ENCODE measurements at regions of chr1 and their contacts with region 1.

Region 1: DNA sequence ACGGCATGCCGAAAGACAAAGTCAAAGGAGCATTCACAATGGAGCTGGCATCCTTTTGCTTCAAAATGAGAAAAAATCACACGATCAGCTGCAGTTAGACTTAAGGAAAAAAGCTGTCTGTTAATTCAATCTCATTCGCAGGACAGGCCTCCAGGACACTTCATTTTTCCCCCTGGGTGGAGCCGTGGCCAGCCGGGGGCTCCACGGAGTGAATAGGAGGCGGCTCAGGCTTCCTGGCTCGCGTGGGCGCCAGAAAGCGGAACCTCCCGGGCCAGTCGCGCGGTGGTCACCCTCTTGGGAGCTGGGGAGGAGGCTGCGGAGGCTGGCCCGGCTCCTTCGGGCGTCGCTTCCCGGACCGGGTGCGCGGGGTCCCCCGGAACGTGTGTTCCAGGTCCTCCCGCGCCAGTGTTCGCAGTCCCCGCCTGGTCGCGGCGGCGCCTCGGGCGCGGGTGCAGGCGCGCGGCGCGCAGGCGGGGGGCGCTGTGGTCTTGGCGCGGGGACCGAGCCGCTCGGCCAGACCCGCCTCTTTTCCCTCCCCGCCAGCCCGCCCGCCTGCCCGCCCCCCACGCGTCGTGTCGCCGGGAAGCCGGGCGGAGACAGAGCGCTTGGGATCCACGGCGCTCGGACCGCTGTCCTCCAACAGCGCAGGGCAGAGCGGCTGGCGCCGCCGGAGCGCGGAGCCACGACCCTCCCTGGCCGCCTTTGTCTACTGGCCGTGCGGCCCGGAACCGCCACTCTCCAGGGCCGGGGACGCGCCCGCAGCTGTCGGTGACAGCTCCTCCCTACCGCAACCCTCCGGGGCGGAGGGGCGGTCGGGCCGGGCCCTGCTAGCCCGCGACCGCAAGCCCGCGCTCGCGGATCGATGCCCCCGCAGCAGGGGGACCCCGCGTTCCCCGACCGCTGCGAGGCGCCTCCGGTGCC is at the start of gene RHOU:
- DNase-seq: peak; percentile 82
- ATAC-seq: peak; percentile 88
- H3K4me3 Mint-ChIP-seq: peak within 1 kb of the TSS; percentile 70
- H3K27ac Mint-ChIP-seq: no peak within 1 kb of the TSS
- H3K4me1 Mint-ChIP-seq: peaks cover 8% of the 10 kb centered on the region
- H3K27me3 Mint-ChIP-seq: peaks cover 10% of the 10 kb centered on the region
- total RNA-seq, gene RHOU: 1.2 TPM

Region 2: GRCh38 chr1:228853637-228854036 is 118.5 kb after region 1 on chr1:
- CTCF ChIA-PET with region 1: no interaction called
- POLR2A ChIA-PET with region 1: no interaction called
- intact Hi-C with region 1: no loop called
- DNase-seq: no peak
- ATAC-seq: no peak
- H3K4me3 Mint-ChIP-seq: no peak overlapping the region
- H3K27ac Mint-ChIP-seq: no peak overlapping the region
- H3K4me1 Mint-ChIP-seq: no peaks in the 10 kb centered on the region
- H3K27me3 Mint-ChIP-seq: peaks cover 3% of the 10 kb centered on the region

Region 3: GRCh38 chr1:228921481-228921880 is 186.3 kb after region 1 on chr1:
- CTCF ChIA-PET with region 1: no interaction called
- POLR2A ChIA-PET with region 1: no interaction called
- intact Hi-C with region 1: loop called in 1 of 2 experiments (anchors 10 kb)
- DNase-seq: no peak
- ATAC-seq: no peak
- H3K4me3 Mint-ChIP-seq: no peak overlapping the region
- H3K27ac Mint-ChIP-seq: no peak overlapping the region
- H3K4me1 Mint-ChIP-seq: no peaks in the 10 kb centered on the region
- H3K27me3 Mint-ChIP-seq: peaks cover 2% of the 10 kb centered on the region

Region 4: GRCh38 chr1:228927946-228928898 is 193.1 kb after region 1 on chr1:
- CTCF ChIA-PET with region 1: no interaction called
- POLR2A ChIA-PET with region 1: no interaction called
- intact Hi-C with region 1: loop called (anchors 1 to 10 kb)
- DNase-seq: peak; percentile 57
- ATAC-seq: peak; percentile 92
- H3K4me3 Mint-ChIP-seq: no peak overlapping the region
- H3K27ac Mint-ChIP-seq: peak overlapping the region; percentile 17
- H3K4me1 Mint-ChIP-seq: peaks cover 11% of the 10 kb centered on the region
- H3K27me3 Mint-ChIP-seq: peaks cover 2% of the 10 kb centered on the region

Region 5: DNA sequence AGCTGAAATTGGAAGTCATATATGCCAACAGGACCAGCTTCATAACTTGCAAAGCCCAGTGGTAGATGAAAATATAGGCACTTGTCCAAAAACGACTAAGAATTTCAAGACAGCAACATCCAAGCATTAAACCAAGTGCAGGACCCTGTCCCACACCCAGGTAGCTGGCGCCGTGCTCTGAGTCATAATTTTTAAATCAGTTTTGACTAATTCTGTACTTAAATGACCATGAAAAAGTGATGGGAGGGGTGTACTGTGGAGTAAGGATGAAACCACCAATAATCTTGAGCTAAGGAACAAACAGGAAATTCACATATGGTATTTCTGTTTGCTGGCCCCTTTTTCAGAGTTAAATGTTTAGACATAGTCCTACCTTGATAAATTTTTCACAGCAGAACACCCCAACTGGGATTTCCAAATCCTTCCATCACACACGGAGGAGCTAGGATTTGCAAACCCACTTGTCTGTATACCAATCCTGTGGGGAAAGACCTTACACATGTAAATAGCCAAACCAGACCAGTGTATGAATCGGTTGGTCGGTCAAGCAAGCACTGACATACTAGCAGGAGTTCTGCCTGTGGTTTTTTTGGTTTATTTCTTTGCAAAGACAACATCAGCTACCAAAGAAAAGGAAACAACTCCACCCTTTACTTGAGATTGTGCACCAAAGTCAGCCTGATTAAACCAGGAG is 300.1 kb after region 1 on chr1:
- CTCF ChIA-PET with region 1: no interaction called
- POLR2A ChIA-PET with region 1: no interaction called
- intact Hi-C with region 1: loop called in 1 of 2 experiments (anchors 10 kb)
- DNase-seq: peak; percentile 26
- ATAC-seq: peak; percentile 65
- H3K4me3 Mint-ChIP-seq: no peak overlapping the region
- H3K27ac Mint-ChIP-seq: no peak overlapping the region
- H3K4me1 Mint-ChIP-seq: peaks cover 34% of the 10 kb centered on the region
- H3K27me3 Mint-ChIP-seq: peaks cover 7% of the 10 kb centered on the region